K562 (cell line): ENCODE measurements at regions of chr1 and their contacts with region 1.

Region 1: DNA sequence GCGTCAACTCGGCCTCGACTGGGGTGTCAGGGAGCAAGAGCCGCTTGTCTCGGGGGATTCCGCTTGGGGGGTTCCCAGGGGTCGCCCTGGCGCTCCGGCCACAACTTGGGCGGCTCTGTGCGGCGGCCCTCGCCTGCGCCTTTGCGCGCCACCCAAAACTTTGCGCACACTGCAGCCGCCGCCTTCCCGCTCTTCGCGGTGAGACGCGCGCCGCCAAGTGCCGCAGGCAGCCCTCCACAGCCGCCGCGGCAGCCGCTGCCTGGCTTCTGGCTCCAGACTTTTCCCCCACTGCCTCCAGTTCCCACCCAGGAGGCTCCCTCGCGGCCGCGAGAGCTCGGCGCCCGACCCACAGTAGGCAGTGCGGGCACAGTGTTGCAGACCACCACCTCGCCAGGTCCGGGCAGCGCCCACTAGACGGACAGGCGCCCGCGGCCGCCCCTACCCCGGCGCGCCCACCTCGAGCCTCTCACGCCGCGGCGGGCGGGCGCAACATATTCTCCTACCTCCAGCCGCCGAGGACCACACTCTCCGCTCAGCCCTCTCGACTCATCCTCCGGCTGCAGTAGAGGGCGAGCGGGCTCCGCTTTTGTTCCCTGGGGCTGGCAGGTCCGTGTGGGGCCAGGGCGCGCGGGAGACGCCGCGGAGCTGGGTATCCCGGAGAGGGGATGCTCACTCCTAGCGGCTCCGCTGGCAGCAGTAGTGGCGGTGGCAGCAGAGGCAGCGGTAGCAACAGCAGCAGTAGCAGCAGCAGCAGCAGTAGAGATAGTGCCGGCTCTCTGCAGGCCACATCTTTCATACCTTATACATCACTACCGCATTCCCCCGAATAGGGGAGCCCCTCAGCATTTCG is 296.6 kb downstream of the OMA1 start:
- DNase-seq: peak in 2 of 4 experiments; percentile 9 to 12
- ATAC-seq: peak; percentile 83
- H3K4me3 ChIP-seq: no peak overlapping the region
- H3K27ac ChIP-seq: no peak overlapping the region
- H3K4me1 ChIP-seq: peaks cover 0 to 4% of the 10 kb centered on the region in 2 experiments; a peak in 1 of 5 replicates
- H3K27me3 ChIP-seq: peaks cover 4 to 23% of the 10 kb centered on the region in 2 experiments; a peak in 3 of 5 replicates
- CTCF ChIP-seq: no peak
- EP300 ChIP-seq: no peak
- POLR2A ChIP-seq: no peak
- RAD21 ChIP-seq: no peak

Region 2: DNA sequence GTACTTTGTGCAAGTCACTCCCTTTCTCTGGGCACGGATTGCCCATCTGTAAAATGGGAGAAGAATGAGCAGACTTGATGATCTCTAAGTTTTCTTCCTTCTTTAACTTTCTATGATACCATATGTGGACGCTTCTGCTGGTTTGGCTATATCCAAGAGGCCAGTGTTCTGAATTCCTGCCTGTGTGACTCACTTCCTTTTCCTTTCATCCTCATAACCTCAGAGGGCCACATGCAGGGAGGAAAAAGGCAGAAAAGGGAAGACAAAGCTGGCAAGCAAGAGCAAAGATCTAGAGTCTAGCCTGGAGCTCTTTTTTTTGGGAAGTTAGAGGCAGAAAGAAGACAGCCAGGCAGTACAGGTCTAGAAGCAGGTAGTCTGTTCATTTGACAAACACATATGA is 145.4 kb after region 1 on chr1:
- CTCF ChIA-PET with region 1: no interaction called
- POLR2A ChIA-PET with region 1: no interaction called
- in situ Hi-C with region 1: no loop called
- intact Hi-C with region 1: loop called (anchors 10 kb)
- DNase-seq: no peak
- ATAC-seq: no peak
- H3K4me3 ChIP-seq: no peak overlapping the region
- H3K27ac ChIP-seq: no peak overlapping the region
- H3K4me1 ChIP-seq: no peaks in the 10 kb centered on the region; a peak in 1 of 5 replicates
- H3K27me3 ChIP-seq: peaks cover 2 to 18% of the 10 kb centered on the region in 2 experiments; a peak in 2 of 5 replicates
- CTCF ChIP-seq: no peak
- EP300 ChIP-seq: no peak
- POLR2A ChIP-seq: no peak
- RAD21 ChIP-seq: no peak